ENCODE measurements at regions of chr14 and their contacts with region 1.

Region 1: GRCh38 chr14:75236901-75237419 is 41.7 kb upstream of the FOS start:
- DNase-seq: no peak
- H3K4me3 ChIP-seq: no peak overlapping the region
- H3K27ac ChIP-seq: no peak overlapping the region
- H3K4me1 ChIP-seq: peaks cover 37% of the 10 kb centered on the region
- H3K27me3 ChIP-seq: no peaks in the 10 kb centered on the region
- CTCF ChIP-seq: no peak

Region 2: GRCh38 chr14:74377976-74378655 is 858.8 kb before region 1 on chr14:
- CTCF ChIA-PET with region 1: no interaction called
- POLR2A ChIA-PET with region 1: no interaction called
- intact Hi-C with region 1: no loop called
- DNase-seq: no peak
- H3K4me3 ChIP-seq: no peak overlapping the region
- H3K27ac ChIP-seq: no peak overlapping the region
- H3K4me1 ChIP-seq: peaks cover 24% of the 10 kb centered on the region
- H3K27me3 ChIP-seq: no peaks in the 10 kb centered on the region
- CTCF ChIP-seq: no peak

Region 3: GRCh38 chr14:75158843-75159614 is 77.9 kb before region 1 on chr14:
- CTCF ChIA-PET with region 1: no interaction called
- POLR2A ChIA-PET with region 1: interaction called, 20 read pairs
- intact Hi-C with region 1: loop called (anchors 5 kb)
- DNase-seq: no peak
- H3K4me3 ChIP-seq: no peak overlapping the region
- H3K27ac ChIP-seq: peak overlapping the region; percentile 35
- H3K4me1 ChIP-seq: peaks cover 25% of the 10 kb centered on the region
- H3K27me3 ChIP-seq: no peaks in the 10 kb centered on the region
- CTCF ChIP-seq: no peak

Measured in PC-9 (cell line).